Vagina (tissue), 2 donors: ENCODE measurements at regions of chr12 and their contacts with region 1.

Region 1: GRCh38 chr12:133181238-133181959 is at the start of gene ZNF268:
- DNase-seq: no peak
- H3K4me3 ChIP-seq: peak within 1 kb of the TSS; percentile 81 to 88
- H3K27ac ChIP-seq: peak within 1 kb of the TSS; percentile 47
- H3K4me1 ChIP-seq: peaks cover 13% of the 10 kb centered on the region
- H3K27me3 ChIP-seq: no peaks in the 10 kb centered on the region
- CTCF ChIP-seq: peak; percentile 55 to 72 (median 61)
- POLR2A ChIP-seq: no peak
- total RNA-seq, gene ZNF268: 9.1 TPM

Region 2: GRCh38 chr12:133080368-133081158 is 100.8 kb before region 1 on chr12 and contains the start of gene ZNF140:
- intact Hi-C with region 1: loop called (anchors 1 kb)
- DNase-seq: peak in 1 of 2 donors; percentile 95
- H3K4me3 ChIP-seq: peak within 1 kb of the TSS; percentile 75 to 80
- H3K27ac ChIP-seq: peak within 1 kb of the TSS; percentile 97
- H3K4me1 ChIP-seq: peaks cover 12% of the 10 kb centered on the region
- H3K27me3 ChIP-seq: no peaks in the 10 kb centered on the region
- CTCF ChIP-seq: peak in 1 of 3 experiments; percentile 17
- POLR2A ChIP-seq: no peak
- total RNA-seq, gene ZNF140: 9.3 TPM

Region 3: GRCh38 chr12:133165776-133166175 is 15.6 kb before region 1 on chr12:
- intact Hi-C with region 1: no loop called
- DNase-seq: no peak
- H3K4me3 ChIP-seq: no peak overlapping the region
- H3K27ac ChIP-seq: no peak overlapping the region
- H3K4me1 ChIP-seq: no peaks in the 10 kb centered on the region
- H3K27me3 ChIP-seq: no peaks in the 10 kb centered on the region
- CTCF ChIP-seq: no peak
- POLR2A ChIP-seq: no peak

Region 4: DNA sequence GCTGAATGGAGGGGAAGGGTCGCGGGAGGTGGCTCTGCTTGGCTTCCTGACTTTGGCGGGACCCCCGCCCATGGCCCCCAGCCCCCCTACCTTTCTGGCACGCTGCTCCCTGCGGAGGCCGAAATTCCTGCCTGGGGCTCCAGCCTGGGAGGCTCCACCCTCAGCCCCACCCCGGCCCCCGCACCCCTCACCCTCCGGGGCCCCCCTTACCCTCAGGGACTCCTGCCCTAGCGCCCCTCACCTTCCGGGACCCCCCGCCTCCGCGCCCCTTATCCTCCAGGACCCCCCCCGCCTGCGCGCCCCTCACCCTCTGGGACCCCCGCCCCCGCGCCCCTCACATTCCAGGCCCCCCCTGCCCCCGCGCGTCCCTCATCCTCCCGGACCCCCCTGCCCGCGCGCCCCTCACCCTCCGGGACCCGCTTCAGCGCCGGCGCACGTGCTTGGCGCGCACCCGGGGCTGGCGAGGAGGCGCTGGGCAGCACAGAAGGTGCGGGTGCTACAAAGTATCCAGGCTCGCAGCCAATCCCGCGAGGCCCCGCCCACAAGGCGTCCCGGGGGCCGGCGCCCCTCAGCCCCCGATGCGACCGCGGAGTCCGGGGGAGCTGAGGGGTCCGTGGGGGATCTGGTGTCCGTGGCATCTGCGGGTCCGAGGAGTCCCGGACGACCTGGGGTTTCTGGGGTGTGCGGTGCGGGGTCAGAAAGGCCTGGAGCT is 54.2 kb after region 1 on chr12 and contains the start of gene ANHX:
- intact Hi-C with region 1: no loop called
- DNase-seq: peak in 1 of 2 donors; percentile 72
- H3K4me3 ChIP-seq: no peak within 1 kb of the TSS
- H3K27ac ChIP-seq: no peak within 1 kb of the TSS
- H3K4me1 ChIP-seq: no peaks in the 10 kb centered on the region
- H3K27me3 ChIP-seq: no peaks in the 10 kb centered on the region
- CTCF ChIP-seq: no peak
- POLR2A ChIP-seq: no peak
- total RNA-seq, gene ANHX: not detected